Prostate gland (tissue), 2 donors: ENCODE measurements at regions of chr16 and their contacts with region 1.

Region 1: GRCh38 chr16:67667817-67668494 is 1.3 kb downstream of the C16orf86 start:
- DNase-seq: peak; percentile 86
- H3K4me3 ChIP-seq: peak overlapping the region; percentile 67 to 85
- H3K27ac ChIP-seq: peak overlapping the region; percentile 79 to 81
- H3K4me1 ChIP-seq: peaks cover 7% of the 10 kb centered on the region
- H3K27me3 ChIP-seq: no peaks in the 10 kb centered on the region
- CTCF ChIP-seq: peak; percentile 52 to 97 (median 87)
- POLR2A ChIP-seq: no peak

Region 2: GRCh38 chr16:67521095-67521804 is 146.7 kb before region 1 on chr16:
- intact Hi-C with region 1: loop called (anchors 10 kb)
- DNase-seq: peak; percentile 96
- H3K4me3 ChIP-seq: peak overlapping the region; percentile 29 to 34
- H3K27ac ChIP-seq: peak overlapping the region; percentile 92 to 96
- H3K4me1 ChIP-seq: no peaks in the 10 kb centered on the region
- H3K27me3 ChIP-seq: no peaks in the 10 kb centered on the region
- CTCF ChIP-seq: peak; percentile 71 to 97 (median 90)
- POLR2A ChIP-seq: peak; percentile 63

Region 3: GRCh38 chr16:67736858-67737257 is 68.9 kb after region 1 on chr16:
- intact Hi-C with region 1: no loop called
- DNase-seq: no peak
- H3K4me3 ChIP-seq: no peak overlapping the region
- H3K27ac ChIP-seq: no peak overlapping the region
- H3K4me1 ChIP-seq: no peaks in the 10 kb centered on the region
- H3K27me3 ChIP-seq: no peaks in the 10 kb centered on the region
- CTCF ChIP-seq: no peak
- POLR2A ChIP-seq: no peak

Region 4: DNA sequence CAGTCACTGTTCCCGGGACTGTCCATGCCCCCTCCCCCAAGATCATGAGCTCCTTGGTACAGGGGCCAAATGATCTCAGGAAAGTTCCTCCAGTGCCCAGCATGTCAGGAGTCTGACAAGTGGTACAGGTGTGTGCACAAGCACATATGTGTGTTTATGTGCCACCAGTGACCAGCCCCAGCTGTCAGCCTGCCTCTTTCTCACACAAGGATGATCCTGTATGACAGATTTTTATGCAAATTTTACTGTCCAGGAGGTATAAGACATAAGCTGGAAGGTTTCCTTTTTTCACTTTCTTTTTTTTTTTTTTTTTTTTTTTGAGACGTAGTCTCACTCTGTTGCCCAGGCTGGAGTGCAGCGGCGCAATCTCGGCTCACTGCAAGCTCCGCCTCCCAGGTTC is 82.5 kb after region 1 on chr16:
- intact Hi-C with region 1: no loop called
- DNase-seq: no peak
- H3K4me3 ChIP-seq: no peak overlapping the region
- H3K27ac ChIP-seq: no peak overlapping the region
- H3K4me1 ChIP-seq: no peaks in the 10 kb centered on the region
- H3K27me3 ChIP-seq: no peaks in the 10 kb centered on the region
- CTCF ChIP-seq: no peak
- POLR2A ChIP-seq: no peak